Activated CD4-positive, alpha-beta memory T cell treated with anti-CD3 and anti-CD28 coated beads for 36 hours (primary cell): ENCODE measurements at regions of chr7 and their contacts with region 1.

Region 1: GRCh38 chr7:30740424-30741181 is 11.3 kb upstream of the INMT start:
- DNase-seq: peak; percentile 82
- H3K4me3 Mint-ChIP-seq: no peak overlapping the region
- H3K27ac Mint-ChIP-seq: no peak overlapping the region
- H3K4me1 Mint-ChIP-seq: peaks cover 38% of the 10 kb centered on the region
- H3K27me3 Mint-ChIP-seq: no peaks in the 10 kb centered on the region

Region 2: DNA sequence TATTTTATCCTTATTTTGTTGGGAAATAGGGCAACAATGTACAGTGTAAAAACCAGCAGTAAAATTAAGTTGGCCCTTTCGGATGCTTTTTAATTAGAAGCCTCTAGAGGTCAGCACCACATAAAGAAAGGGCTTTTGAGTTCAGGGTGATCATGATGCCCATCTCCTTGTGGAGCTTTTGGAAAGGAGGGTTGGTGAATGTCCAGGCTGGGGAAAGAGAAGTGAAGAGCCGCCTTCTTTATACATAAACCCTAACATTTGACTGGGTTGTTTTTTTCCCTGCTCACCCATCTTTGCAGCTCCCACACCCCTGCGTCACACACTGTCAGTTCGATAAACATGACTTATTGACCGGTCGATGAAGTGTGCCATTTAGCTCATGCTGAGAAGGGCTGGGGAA is 576.0 kb before region 1 on chr7:
- CTCF ChIA-PET with region 1: no interaction called
- POLR2A ChIA-PET with region 1: no interaction called
- intact Hi-C with region 1: loop called (anchors 5 kb)
- DNase-seq: no peak
- H3K4me3 Mint-ChIP-seq: no peak overlapping the region
- H3K27ac Mint-ChIP-seq: no peak overlapping the region
- H3K4me1 Mint-ChIP-seq: peaks cover 24% of the 10 kb centered on the region
- H3K27me3 Mint-ChIP-seq: no peaks in the 10 kb centered on the region

Region 3: DNA sequence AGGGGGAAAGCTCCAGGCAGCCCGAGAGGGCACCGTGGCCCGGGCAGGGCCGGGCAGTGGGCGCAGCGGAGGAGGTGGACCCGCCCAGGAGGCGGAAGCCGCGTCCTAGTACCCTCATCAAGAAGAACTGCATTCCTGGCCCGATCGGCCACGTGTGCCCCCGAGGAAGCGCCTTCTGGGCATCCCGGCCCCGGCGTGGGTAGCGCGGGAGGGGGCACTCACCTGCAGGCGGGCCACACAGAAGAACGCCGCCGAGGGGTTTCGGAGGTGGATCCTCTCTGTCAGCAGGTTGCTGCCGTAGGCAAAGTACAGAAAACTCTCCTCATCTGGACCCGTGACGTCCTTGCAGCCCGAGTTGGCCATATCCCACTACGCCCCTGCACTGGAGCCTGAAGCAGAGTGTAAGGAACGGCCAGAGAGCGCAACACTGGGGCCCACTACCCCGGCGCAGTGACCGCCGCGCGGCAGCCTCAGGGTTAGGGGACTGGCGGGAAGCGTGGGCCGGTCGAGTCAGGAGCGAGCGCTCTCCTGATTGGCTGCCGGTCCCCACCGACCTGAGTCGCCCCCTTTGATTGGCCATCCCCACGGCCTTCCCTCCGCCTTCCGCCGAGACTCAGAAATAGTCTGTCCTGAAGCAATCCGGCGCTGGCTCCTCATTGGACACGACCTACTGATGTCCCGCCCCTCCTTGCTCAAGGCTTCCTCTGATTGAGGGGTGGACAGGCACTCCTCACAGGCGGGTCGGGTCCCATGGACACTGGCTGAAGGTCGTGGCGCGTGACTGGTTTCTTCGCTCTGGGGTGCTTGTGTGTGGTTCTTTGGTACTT is 236.0 kb before region 1 on chr7 and contains the start of gene GGCT:
- CTCF ChIA-PET with region 1: interaction called, 3 read pairs
- POLR2A ChIA-PET with region 1: no interaction called
- intact Hi-C with region 1: loop called (anchors 2 kb)
- DNase-seq: peak; percentile 99
- H3K4me3 Mint-ChIP-seq: peak within 1 kb of the TSS; percentile 77
- H3K27ac Mint-ChIP-seq: peak within 1 kb of the TSS; percentile 79
- H3K4me1 Mint-ChIP-seq: peaks cover 38% of the 10 kb centered on the region
- H3K27me3 Mint-ChIP-seq: no peaks in the 10 kb centered on the region
- total RNA-seq, gene GGCT: 60.5 to 68.0 TPM

Region 4: DNA sequence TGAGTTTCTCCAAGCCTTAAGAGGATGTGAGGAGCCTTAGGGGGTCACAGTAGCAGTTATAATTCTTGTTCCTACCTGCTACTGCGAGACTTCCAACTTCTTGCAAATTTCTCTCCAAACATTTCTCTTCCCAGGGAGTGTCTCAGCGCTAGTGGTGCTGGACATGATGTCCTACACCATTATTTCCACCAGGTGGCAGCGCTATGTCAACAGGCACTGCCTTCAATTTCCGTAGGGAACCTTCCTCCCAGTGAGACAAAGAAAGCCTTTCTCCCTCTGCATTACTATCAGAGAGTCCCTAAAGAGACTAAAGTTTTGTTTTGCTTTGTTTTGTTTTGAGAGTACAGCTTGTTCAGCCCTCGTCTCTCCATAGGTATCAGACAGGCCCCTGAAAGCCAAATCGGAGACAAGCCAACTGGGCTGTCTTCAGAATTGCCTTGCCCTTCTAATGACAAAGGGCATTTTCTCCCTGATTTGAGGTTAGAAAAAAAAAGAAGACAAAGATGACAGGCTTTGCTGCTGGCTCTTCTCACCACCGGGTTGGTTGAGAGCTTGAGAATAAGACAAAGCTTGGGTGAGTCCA is 191.8 kb before region 1 on chr7:
- CTCF ChIA-PET with region 1: interaction called, 42 read pairs
- POLR2A ChIA-PET with region 1: no interaction called
- intact Hi-C with region 1: loop called (anchors 1 kb)
- DNase-seq: peak; percentile 51
- H3K4me3 Mint-ChIP-seq: no peak overlapping the region
- H3K27ac Mint-ChIP-seq: no peak overlapping the region
- H3K4me1 Mint-ChIP-seq: no peaks in the 10 kb centered on the region
- H3K27me3 Mint-ChIP-seq: no peaks in the 10 kb centered on the region

Region 5: DNA sequence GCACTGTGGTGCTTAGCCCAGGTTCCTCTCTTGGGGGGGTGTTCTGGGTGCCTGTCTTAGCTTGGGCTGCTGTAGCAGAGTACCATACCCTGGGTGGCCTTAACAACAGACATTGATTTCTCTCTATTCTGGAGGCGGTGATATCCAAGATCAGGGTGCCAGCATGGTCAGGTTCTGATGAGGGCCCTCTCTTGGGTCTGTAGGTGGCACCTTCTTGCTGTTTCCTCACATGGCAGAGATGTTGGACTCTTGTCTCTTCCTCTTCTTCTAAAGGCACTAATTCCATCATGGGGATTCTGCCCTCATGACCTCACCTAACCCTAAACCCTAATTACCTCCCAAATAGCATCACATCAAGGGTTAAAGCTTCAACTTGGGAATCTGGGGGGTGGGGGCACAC is 38.4 kb before region 1 on chr7:
- CTCF ChIA-PET with region 1: interaction called, 41 read pairs
- POLR2A ChIA-PET with region 1: no interaction called
- intact Hi-C with region 1: loop called (anchors 1 kb)
- DNase-seq: peak; percentile 42
- H3K4me3 Mint-ChIP-seq: no peak overlapping the region
- H3K27ac Mint-ChIP-seq: no peak overlapping the region
- H3K4me1 Mint-ChIP-seq: peaks cover 8% of the 10 kb centered on the region
- H3K27me3 Mint-ChIP-seq: no peaks in the 10 kb centered on the region

Region 6: GRCh38 chr7:30727061-30727945 is 13.3 kb before region 1 on chr7:
- CTCF ChIA-PET with region 1: interaction called, 48 read pairs
- POLR2A ChIA-PET with region 1: interaction called, 3 read pairs
- intact Hi-C with region 1: loop called (anchors 1 kb)
- DNase-seq: peak; percentile 71
- H3K4me3 Mint-ChIP-seq: peak overlapping the region; percentile 65
- H3K27ac Mint-ChIP-seq: peak overlapping the region; percentile 79
- H3K4me1 Mint-ChIP-seq: peaks cover 44% of the 10 kb centered on the region
- H3K27me3 Mint-ChIP-seq: no peaks in the 10 kb centered on the region